HEK293 (cell line): ENCODE measurements at regions of chr1 and their contacts with region 1.

Region 1: GRCh38 chr1:209652873-209653401 is 712 bp upstream of the LAMB3 start:
- H3K4me3 ChIP-seq: no peak overlapping the region
- H3K27ac ChIP-seq: peak overlapping the region; percentile 34
- H3K4me1 ChIP-seq: peaks cover 19% of the 10 kb centered on the region
- CTCF ChIP-seq: no peak

Region 2: GRCh38 chr1:209190591-209191261 is 462.2 kb before region 1 on chr1:
- CTCF ChIA-PET with region 1: no interaction called
- POLR2A ChIA-PET with region 1: no interaction called
- H3K4me3 ChIP-seq: no peak overlapping the region
- H3K27ac ChIP-seq: no peak overlapping the region
- H3K4me1 ChIP-seq: no peaks in the 10 kb centered on the region
- CTCF ChIP-seq: peak; percentile 64; the same call in 1 of the 2 replicates

Region 3: DNA sequence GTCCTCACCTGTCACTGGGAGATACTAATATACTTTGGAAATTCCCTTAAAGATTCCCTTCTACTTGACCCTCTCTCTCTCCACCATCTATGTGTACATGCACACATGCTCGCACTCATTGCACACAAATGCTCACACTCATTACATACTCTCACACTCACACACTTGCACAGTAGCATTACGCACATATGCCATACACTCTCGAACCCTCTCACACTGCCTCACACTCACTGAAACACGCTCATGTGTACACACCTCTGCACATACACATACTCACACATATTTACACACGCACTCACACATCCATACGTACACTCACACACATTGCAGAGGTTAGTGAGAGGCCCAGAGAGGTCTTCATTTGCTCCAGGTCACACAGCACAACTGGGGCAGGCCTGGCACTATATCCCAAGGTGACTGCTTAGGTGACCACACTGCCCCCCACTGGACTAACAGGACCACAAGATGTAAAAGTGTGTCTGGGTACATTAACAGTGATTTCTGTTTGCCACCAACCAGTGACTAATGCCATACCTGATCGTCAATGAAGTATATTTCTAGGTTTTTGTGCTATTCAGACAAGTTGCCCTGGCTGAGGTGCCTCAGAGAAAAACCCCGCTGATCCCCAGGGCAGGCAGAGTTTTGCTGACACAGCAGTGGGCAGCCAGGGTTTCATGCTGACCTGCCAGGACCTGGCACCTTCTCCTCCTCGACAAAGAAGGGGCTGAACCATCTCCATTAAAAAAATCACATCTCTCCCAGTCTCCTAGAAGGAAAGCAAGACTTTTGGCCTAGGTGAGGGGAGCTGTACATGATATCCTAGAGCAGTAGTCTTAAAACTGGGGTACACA is 98.0 kb before region 1 on chr1:
- CTCF ChIA-PET with region 1: no interaction called
- POLR2A ChIA-PET with region 1: no interaction called
- H3K4me3 ChIP-seq: no peak overlapping the region
- H3K27ac ChIP-seq: no peak overlapping the region
- H3K4me1 ChIP-seq: no peaks in the 10 kb centered on the region
- CTCF ChIP-seq: no peak

Region 4: GRCh38 chr1:209627732-209628196 is 25.2 kb before region 1 on chr1:
- CTCF ChIA-PET with region 1: interaction called, 10 read pairs
- POLR2A ChIA-PET with region 1: no interaction called
- H3K4me3 ChIP-seq: no peak overlapping the region
- H3K27ac ChIP-seq: no peak overlapping the region
- H3K4me1 ChIP-seq: no peaks in the 10 kb centered on the region
- CTCF ChIP-seq: peak; percentile 90